Activated CD8-positive, alpha-beta T cell treated with anti-CD3 and anti-CD28 coated beads for 36 hours (primary cell): ENCODE measurements at regions of chr1 and their contacts with region 1.

Region 1: DNA sequence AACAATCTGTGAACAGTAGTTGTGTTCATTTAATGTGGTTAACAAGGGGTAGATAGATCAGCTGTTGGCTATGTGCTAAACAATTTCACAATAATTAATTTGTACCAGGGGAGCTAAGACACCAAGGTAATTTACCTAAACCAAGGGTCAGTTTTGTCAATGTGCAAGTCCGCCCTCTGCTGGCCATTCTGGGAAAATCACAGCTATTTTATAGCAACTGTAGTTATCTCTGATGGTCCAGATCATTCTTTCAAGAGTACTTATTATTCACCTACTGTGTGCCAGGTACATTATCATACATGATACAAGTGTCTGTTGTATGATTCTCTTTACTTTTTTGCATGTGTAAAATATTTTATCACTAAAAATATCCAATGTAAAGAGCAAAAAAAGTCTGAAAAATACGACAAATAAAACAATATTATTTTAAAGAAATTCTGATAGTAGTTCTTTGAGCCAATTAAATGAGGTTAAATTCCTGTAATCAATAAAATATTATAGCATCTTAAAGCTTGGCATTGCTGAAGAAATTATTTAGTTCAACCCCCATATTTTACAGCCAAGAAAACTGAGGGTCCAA is 312.3 kb upstream of the FAM78B start:
- DNase-seq: peak; percentile 77
- ATAC-seq: no peak
- H3K4me3 Mint-ChIP-seq: no peak overlapping the region
- H3K27ac Mint-ChIP-seq: no peak overlapping the region
- H3K4me1 Mint-ChIP-seq: no peaks in the 10 kb centered on the region
- H3K27me3 Mint-ChIP-seq: no peaks in the 10 kb centered on the region
- CTCF ChIP-seq: peak; percentile 81

Region 2: GRCh38 chr1:165928075-165928731 is 550.9 kb before region 1 on chr1:
- CTCF ChIA-PET with region 1: interaction called, 13 read pairs
- POLR2A ChIA-PET with region 1: no interaction called
- intact Hi-C with region 1: loop called (anchors 5 kb)
- DNase-seq: peak; percentile 71
- ATAC-seq: peak; percentile 85
- H3K4me3 Mint-ChIP-seq: no peak overlapping the region
- H3K27ac Mint-ChIP-seq: no peak overlapping the region
- H3K4me1 Mint-ChIP-seq: no peaks in the 10 kb centered on the region
- H3K27me3 Mint-ChIP-seq: peaks cover 19% of the 10 kb centered on the region
- CTCF ChIP-seq: peak; percentile 72

Region 3: GRCh38 chr1:166133276-166133841 is 345.8 kb before region 1 on chr1:
- CTCF ChIA-PET with region 1: interaction called, 10 read pairs
- POLR2A ChIA-PET with region 1: no interaction called
- intact Hi-C with region 1: no loop called
- DNase-seq: peak; percentile 20
- ATAC-seq: no peak
- H3K4me3 Mint-ChIP-seq: no peak overlapping the region
- H3K27ac Mint-ChIP-seq: no peak overlapping the region
- H3K4me1 Mint-ChIP-seq: no peaks in the 10 kb centered on the region
- H3K27me3 Mint-ChIP-seq: no peaks in the 10 kb centered on the region
- CTCF ChIP-seq: peak; percentile 17

Region 4: DNA sequence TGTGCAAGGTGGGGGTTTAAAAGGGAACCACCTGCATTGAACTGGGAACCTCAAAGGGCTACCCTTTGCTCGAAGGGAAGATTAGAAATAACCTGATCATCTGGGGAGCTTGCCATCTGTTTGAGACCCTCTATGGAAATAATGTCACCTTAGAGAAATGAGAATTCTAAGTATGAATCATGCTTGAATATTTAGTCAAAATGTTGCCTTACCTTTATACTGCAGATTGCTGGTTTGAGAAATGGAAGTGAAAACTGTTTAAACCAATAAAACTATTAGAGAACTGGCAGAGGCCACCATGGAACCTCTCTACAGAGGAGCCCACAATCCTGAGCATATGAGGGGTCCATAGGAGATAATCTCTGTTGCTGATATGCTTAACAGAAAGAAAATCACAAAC is 181.1 kb before region 1 on chr1:
- CTCF ChIA-PET with region 1: no interaction called
- POLR2A ChIA-PET with region 1: no interaction called
- intact Hi-C with region 1: no loop called
- DNase-seq: no peak
- ATAC-seq: no peak
- H3K4me3 Mint-ChIP-seq: no peak overlapping the region
- H3K27ac Mint-ChIP-seq: no peak overlapping the region
- H3K4me1 Mint-ChIP-seq: no peaks in the 10 kb centered on the region
- H3K27me3 Mint-ChIP-seq: peaks cover 6% of the 10 kb centered on the region
- CTCF ChIP-seq: no peak

Region 5: DNA sequence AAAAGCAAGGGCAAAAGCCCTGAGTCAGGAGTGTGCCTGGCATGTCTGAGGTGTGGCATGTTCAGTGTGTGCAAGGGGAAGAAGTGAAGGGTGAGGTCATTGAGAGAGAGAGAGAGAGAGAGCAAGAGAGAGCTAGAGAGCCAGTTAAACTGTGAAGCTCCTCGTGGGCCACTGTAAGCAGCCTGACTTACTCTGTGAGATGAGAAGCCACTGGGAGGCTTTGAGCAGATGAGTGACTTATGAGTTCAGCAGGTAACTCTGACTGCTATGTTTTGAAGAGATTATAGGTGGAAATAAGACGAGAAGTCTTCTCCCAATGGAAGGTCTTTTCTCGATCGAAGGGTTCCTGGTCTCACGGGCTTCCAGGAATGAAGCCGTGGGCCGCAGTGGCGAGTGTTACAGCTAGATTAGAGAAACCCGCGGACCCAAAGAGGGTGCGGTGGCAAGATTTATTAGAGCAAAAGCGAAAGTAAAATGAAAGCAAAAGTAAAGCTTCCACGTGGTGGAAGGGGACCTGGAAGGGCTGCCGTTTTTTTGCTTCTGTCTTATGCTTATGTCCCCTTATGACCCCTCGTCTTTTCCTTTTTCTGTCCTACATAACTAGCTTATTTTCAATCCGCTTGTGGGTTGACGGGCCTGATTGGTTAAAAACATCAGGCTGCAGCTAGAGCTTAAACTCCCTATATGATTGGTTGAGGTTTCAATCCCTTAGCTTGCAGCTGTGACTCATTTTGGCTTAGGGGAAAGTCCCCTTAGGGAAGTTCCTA is 10.7 kb after region 1 on chr1:
- CTCF ChIA-PET with region 1: interaction called, 44 read pairs
- POLR2A ChIA-PET with region 1: interaction called, 4 read pairs
- intact Hi-C with region 1: no loop called
- DNase-seq: peak; percentile 70
- ATAC-seq: peak; percentile 81
- H3K4me3 Mint-ChIP-seq: no peak overlapping the region
- H3K27ac Mint-ChIP-seq: no peak overlapping the region
- H3K4me1 Mint-ChIP-seq: peaks cover 15% of the 10 kb centered on the region
- H3K27me3 Mint-ChIP-seq: peaks cover 1% of the 10 kb centered on the region
- CTCF ChIP-seq: no peak